Breast epithelium (tissue), 4 donors: ENCODE measurements at regions of chr4 and their contacts with region 1.

Region 1: DNA sequence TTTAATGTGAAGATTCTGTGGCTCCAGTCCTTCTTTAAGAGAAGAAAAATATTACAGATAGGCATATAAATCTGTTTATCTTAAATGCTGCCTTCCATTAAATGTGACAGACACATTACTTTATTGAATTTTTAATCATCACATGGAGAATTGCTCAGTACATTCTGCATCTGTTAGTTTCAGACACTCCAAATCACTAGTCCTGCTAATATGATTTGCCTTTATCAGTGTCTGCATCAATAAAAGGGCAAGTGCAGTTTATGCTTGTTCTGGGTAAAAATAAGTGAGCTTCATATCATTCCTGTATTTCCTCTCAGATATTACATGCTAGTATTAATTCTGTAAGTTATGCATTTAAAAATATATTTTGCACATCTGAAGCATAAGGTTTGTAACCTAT is 666.4 kb downstream of the TECRL start:
- DNase-seq: no peak
- H3K4me3 ChIP-seq: no peak overlapping the region
- H3K27ac ChIP-seq: no peak overlapping the region
- H3K4me1 ChIP-seq: no peaks in the 10 kb centered on the region
- H3K27me3 ChIP-seq: no peaks in the 10 kb centered on the region
- CTCF ChIP-seq: no peak
- POLR2A ChIP-seq: no peak

Region 2: DNA sequence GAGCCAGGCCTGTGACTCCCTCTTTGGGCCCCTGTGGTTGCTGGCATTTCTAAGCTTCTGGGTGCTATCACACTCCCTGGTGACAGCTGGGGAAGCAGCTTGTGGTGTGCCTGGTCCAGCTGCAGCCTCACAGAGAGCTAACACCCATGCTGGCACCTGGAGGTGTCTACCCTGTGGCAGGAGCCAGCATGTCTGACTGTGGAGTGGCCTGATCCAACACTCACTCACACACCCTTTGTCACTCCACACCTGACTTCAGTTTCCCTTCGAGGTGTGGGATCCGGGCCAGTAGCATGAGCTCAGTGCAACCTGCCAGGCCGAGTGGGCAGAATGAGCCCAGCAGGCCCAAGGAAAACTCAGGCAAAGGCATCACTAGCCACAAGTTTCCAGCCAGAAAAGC is 598.8 kb after region 1 on chr4:
- intact Hi-C with region 1: loop called (anchors 5 kb)
- DNase-seq: no peak
- H3K4me3 ChIP-seq: no peak overlapping the region
- H3K27ac ChIP-seq: no peak overlapping the region
- H3K4me1 ChIP-seq: no peaks in the 10 kb centered on the region
- H3K27me3 ChIP-seq: no peaks in the 10 kb centered on the region
- CTCF ChIP-seq: no peak
- POLR2A ChIP-seq: no peak